Natural killer cell (primary cell): ENCODE measurements at regions of chr7 and their contacts with region 1.

Region 1: DNA sequence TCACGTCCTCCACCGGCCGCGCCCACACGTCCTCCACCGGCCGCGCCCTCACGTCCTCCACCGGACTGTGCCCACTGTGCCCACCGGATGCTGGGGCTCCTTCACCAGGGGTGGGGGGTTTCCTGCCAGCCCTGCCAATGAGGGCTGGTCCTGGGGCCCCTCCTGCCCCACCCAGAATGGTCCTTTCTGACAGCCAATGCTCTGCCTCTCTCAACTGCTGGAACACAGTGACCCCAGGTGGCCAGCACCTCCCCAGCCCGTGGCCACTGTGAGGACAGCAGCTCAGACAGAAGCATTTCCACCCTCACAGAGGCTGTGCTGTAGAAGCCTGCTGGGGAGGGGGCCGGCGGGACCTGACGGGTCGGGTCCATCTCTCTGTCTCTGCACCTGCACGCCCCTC is 90.1 kb upstream of the DNAAF5 start:
- DNase-seq: peak; percentile 65 to 74
- ATAC-seq: peak; percentile 59 to 99 (median 98)
- H3K4me3 ChIP-seq: no peak overlapping the region
- H3K4me3 Mint-ChIP-seq: no peak overlapping the region
- H3K27ac ChIP-seq: no peak overlapping the region
- H3K27ac Mint-ChIP-seq: peak overlapping the region; percentile 73 to 94
- H3K4me1 ChIP-seq: peaks cover 8% of the 10 kb centered on the region
- H3K4me1 Mint-ChIP-seq: peaks cover 5 to 6% of the 10 kb centered on the region in 2 donors
- H3K27me3 ChIP-seq: no peaks in the 10 kb centered on the region
- H3K27me3 Mint-ChIP-seq: no peaks in the 10 kb centered on the region
- CTCF ChIP-seq: peak; percentile 65

Region 2: GRCh38 chr7:332646-333392 is 303.6 kb before region 1 on chr7:
- intact Hi-C with region 1: loop called (anchors 1 kb)
- DNase-seq: peak; percentile 76 to 91
- ATAC-seq: peak; percentile 72 to 97 (median 95)
- H3K4me3 ChIP-seq: no peak overlapping the region
- H3K4me3 Mint-ChIP-seq: no peak overlapping the region
- H3K27ac ChIP-seq: no peak overlapping the region
- H3K27ac Mint-ChIP-seq: no peak overlapping the region
- H3K4me1 ChIP-seq: peaks cover 9% of the 10 kb centered on the region
- H3K4me1 Mint-ChIP-seq: peaks cover 0 to 10% of the 10 kb centered on the region in 2 donors
- H3K27me3 ChIP-seq: no peaks in the 10 kb centered on the region
- H3K27me3 Mint-ChIP-seq: peaks cover 0 to 17% of the 10 kb centered on the region in 2 donors
- CTCF ChIP-seq: peak; percentile 74

Region 3: DNA sequence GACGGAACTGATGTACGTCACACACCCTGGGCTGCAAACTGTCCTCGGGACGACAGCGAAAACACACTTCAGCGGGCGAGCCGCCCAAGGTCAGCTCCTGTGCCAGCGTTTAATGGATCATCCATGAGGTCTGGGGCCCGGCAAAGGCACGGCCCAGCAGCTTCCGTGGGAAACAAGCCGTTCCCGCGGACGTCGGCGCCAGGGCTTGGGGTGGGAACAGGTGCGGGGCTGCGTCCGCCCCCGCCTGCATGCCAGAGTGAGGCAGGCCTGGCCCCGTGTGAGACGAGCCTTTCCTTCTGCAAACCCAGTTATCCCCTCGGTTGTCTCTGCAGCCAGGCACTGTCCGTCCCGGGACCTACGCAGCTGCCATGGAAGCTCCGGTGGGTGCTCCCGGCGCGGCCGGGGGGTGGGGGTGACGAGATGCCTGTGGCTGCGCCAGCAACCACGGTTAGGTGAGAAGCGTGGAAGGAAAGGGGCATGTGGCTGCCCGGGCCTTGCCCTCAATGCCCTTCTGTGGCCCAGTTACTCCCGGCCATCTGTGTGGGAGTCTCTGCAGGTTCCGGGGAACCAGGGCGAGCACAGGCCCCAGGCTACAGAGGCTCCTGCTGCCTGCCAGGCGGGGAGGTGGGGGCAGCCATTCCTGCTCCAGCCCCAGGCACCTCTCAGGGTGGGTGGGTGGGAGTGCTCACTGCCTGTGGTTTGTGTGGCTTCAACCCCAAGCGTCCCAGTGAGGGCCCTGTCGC is 74.6 kb before region 1 on chr7:
- intact Hi-C with region 1: no loop called
- DNase-seq: no peak
- ATAC-seq: no peak
- H3K4me3 ChIP-seq: no peak overlapping the region
- H3K4me3 Mint-ChIP-seq: no peak overlapping the region
- H3K27ac ChIP-seq: no peak overlapping the region
- H3K27ac Mint-ChIP-seq: no peak overlapping the region
- H3K4me1 ChIP-seq: no peaks in the 10 kb centered on the region
- H3K4me1 Mint-ChIP-seq: peaks cover 4 to 7% of the 10 kb centered on the region in 2 donors
- H3K27me3 ChIP-seq: no peaks in the 10 kb centered on the region
- H3K27me3 Mint-ChIP-seq: no peaks in the 10 kb centered on the region
- CTCF ChIP-seq: no peak

Region 4: DNA sequence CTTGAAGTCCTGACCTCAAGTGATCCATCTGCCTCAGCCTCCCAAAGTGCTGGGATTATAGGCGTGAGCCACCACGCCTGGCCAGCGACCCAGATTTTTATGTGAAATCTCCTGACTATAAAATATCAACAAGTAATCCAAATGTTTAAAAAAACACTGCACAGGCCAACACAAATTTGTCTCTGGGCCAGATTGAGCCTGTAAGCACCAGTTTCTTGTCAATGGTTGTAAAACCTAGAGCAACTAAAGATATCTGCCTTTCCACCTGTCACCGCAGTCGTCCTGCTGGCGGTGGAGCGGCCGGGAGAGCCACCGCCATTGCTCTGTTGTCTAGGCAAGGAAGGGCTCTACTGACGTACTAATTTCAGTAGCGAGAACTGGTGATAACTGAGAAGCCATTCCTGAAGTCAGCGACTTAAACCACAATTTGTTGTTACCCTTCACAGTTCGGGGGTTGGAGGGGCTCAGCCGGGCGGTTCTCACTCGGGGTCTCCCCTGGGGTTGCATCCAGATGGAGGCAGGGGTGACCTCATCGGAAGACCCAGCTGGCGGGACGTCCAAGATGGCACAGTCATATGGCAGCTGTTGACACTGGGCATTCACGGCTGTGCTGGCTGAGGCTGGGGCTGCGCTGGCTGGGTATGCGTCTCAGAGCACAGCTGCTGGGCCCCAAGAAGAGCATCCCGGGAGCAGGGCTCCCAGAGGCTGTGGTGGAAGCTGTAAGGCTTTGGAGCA is 61.6 kb before region 1 on chr7:
- intact Hi-C with region 1: loop called (anchors 10 kb)
- DNase-seq: no peak
- ATAC-seq: no peak
- H3K4me3 ChIP-seq: no peak overlapping the region
- H3K4me3 Mint-ChIP-seq: no peak overlapping the region
- H3K27ac ChIP-seq: no peak overlapping the region
- H3K27ac Mint-ChIP-seq: no peak overlapping the region
- H3K4me1 ChIP-seq: no peaks in the 10 kb centered on the region
- H3K4me1 Mint-ChIP-seq: peaks cover 5 to 6% of the 10 kb centered on the region in 2 donors
- H3K27me3 ChIP-seq: no peaks in the 10 kb centered on the region
- H3K27me3 Mint-ChIP-seq: no peaks in the 10 kb centered on the region
- CTCF ChIP-seq: no peak

Region 5: DNA sequence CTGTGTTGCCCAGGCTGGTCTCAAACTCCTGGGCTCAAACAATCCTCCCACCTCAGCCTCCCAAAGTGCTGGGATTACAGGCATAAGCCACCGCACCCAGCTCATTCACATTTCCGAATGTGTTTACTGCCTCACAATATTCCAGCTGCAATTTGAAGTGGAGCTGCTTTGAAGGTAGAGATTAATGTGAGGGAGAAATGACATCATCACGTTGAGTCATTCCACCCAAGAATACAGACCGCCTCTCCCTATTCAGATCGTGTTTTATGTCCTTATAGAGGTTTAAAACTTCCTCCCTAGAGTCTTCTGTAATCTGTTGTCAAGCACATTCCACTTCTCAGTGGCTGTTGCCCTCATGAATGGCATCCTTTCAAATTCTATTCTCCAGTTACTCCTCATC is 16.3 kb before region 1 on chr7:
- intact Hi-C with region 1: no loop called
- DNase-seq: peak in 1 of 2 donors; percentile 28
- ATAC-seq: no peak
- H3K4me3 ChIP-seq: no peak overlapping the region
- H3K4me3 Mint-ChIP-seq: peak overlapping the region; percentile 42
- H3K27ac ChIP-seq: peak overlapping the region; percentile 29
- H3K27ac Mint-ChIP-seq: peak overlapping the region; percentile 87 to 92
- H3K4me1 ChIP-seq: peaks cover 42% of the 10 kb centered on the region
- H3K4me1 Mint-ChIP-seq: peaks cover 21 to 38% of the 10 kb centered on the region in 2 donors
- H3K27me3 ChIP-seq: no peaks in the 10 kb centered on the region
- H3K27me3 Mint-ChIP-seq: no peaks in the 10 kb centered on the region
- CTCF ChIP-seq: no peak

Region 6: DNA sequence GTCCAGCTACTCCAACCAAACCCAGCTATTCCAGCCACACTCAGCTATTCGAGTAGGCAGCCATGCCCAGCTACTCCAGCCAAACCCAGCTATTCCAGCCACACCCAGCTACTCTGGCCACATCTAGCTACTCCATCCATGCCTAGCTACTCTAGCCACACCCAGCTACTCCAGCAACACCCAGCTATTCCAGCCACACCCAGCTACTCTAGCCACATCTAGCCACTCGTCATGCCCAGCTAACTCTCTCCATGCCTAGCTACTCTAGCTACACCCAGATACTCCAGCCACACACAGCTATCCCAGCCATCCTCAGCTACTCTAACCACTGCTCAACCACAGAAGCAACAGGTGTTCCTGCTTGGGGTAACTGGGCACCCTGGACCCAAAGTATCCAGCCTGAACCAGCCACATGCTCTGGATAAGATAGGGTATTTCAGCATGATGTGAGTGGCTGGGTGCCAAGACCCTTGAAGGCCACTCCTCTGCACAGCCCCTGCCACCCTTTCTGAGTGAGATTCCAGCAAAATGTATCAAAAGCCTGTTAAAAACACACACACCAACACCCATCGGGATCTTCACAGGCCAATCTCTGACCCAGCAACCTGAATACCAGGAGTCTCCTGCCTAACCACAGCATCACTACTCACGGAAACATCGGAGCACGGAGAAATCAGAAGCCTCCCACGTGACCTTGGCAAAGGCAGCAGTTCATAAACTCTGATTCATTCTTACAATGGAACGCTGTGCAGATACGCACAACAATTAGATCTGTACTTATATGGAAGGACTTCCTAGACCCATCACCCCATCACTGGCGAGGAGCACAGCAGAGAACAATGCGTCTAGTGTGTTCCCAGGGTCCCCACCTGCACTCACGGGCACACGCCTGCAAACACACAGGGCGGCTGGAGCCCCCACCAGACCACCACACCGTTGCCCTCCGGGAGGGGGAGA is 38.3 kb after region 1 on chr7:
- intact Hi-C with region 1: no loop called
- DNase-seq: no peak
- ATAC-seq: no peak
- H3K4me3 ChIP-seq: no peak overlapping the region
- H3K4me3 Mint-ChIP-seq: no peak overlapping the region
- H3K27ac ChIP-seq: no peak overlapping the region
- H3K27ac Mint-ChIP-seq: no peak overlapping the region
- H3K4me1 ChIP-seq: no peaks in the 10 kb centered on the region
- H3K4me1 Mint-ChIP-seq: peaks cover 0 to 7% of the 10 kb centered on the region in 2 donors
- H3K27me3 ChIP-seq: no peaks in the 10 kb centered on the region
- H3K27me3 Mint-ChIP-seq: no peaks in the 10 kb centered on the region
- CTCF ChIP-seq: no peak

Region 7: GRCh38 chr7:1357601-1358271 is 721.3 kb after region 1 on chr7:
- intact Hi-C with region 1: no loop called
- DNase-seq: no peak
- ATAC-seq: no peak
- H3K4me3 ChIP-seq: no peak overlapping the region
- H3K4me3 Mint-ChIP-seq: no peak overlapping the region
- H3K27ac ChIP-seq: no peak overlapping the region
- H3K27ac Mint-ChIP-seq: no peak overlapping the region
- H3K4me1 ChIP-seq: no peaks in the 10 kb centered on the region
- H3K4me1 Mint-ChIP-seq: no peaks in the 10 kb centered on the region
- H3K27me3 ChIP-seq: no peaks in the 10 kb centered on the region
- H3K27me3 Mint-ChIP-seq: peaks cover 0 to 3% of the 10 kb centered on the region in 2 donors
- CTCF ChIP-seq: no peak